ENCODE measurements at regions of chr3 and their contacts with region 1.

Region 1: GRCh38 chr3:87167628-87168456 is 59.3 kb upstream of the CHMP2B start:
- DNase-seq: no peak
- ATAC-seq: no peak
- H3K4me3 ChIP-seq: peak overlapping the region in 9 of 12 donors; percentile 26 to 46 (median 35)
- H3K27ac ChIP-seq: no peak overlapping the region
- H3K4me1 ChIP-seq: peaks cover 0 to 5% (median 0%) of the 10 kb centered on the region in 12 donors
- H3K27me3 ChIP-seq: peaks cover 0 to 5% (median 0%) of the 10 kb centered on the region in 9 donors
- CTCF ChIP-seq: peak; percentile 40 to 73 (median 62)
- POLR2A ChIP-seq: no peak

Region 2: DNA sequence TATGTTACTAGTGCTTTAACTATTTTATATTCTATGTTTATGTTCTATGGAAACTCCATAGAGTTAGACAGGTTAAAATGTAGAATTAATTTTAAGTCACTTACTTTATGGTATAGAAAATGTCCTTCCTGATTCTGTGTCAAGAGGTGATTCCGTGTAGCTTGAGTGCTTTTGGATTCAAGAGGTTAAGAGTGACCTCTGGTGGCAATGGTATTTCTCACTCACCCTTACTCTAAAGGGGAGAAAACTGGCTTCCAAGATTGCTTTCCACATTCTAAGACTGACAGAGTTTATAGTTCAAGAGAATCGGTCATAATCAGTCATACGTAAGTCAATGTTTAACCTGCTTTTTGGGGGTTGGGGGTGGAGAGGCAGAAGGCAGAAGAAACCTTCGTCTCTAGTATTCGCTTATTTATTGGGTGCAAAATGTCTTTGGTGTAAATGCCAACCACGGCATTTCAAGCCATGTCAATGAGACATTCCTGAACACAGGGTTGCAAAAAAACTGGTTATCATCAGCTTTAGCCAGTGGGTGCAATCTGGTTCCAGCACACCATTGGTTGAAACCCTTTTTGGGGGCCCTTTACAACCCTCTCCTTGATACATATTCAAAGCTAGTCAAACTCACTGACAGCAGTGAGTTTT is 84.9 kb before region 1 on chr3:
- intact Hi-C with region 1: loop called in 2 of 10 experiments (anchors 5 to 10 kb)
- DNase-seq: no peak
- ATAC-seq: peak in 3 of 4 donors; percentile 57 to 71 (median 58)
- H3K4me3 ChIP-seq: no peak overlapping the region
- H3K27ac ChIP-seq: no peak overlapping the region
- H3K4me1 ChIP-seq: no peaks in the 10 kb centered on the region
- H3K27me3 ChIP-seq: no peaks in the 10 kb centered on the region
- CTCF ChIP-seq: peak; percentile 20 to 64 (median 42)
- POLR2A ChIP-seq: no peak